K562 (cell line): ENCODE measurements at regions of chr19 and their contacts with region 1.

Region 1: DNA sequence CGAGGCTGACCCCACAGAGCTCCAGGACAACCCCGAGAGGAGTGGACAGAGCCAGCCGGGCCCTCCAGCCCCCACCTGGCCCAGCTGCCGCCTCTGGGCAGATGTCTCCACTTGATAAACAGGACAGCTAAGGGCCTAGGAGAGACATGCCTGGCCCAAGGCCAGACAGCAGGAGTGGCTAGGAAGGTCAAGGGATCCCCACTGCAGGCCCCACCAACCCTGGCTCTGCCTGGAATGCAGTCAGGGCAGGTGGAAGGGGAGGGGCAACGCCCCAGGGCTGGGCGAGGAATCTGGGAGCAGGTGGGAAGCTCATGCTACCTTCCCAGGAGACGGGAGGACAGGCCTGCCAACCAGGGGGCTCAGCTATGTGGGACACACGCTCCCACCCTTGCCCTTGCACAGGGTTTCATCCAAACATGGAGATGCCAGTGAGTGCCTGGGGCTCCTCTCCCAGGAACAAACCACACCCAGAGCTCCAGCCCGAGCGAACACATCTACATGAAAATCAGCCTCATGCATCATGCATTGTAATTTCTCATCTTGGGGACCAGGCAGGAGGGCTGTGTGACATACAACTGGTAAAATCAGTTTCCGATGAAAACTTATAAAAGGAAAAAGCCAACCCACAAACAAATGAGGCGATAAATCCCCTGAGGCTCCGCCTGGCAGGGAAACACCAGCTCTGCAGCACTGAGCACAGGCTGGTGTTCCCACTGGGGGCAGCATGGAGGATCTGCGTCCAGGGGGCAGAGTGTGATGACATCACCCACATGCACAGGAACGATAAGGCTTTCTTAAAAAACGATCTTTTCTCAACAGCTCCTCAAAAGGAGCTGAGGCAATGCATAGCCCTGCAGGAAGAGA is 25.0 kb downstream of the SH3GL1 start:
- DNase-seq: peak; percentile 78 to 95 (median 84)
- ATAC-seq: peak; percentile 75
- H3K4me3 ChIP-seq: peak overlapping the region; percentile 14; the same call in 1 of the 2 replicates
- H3K27ac ChIP-seq: peak overlapping the region; percentile 99
- H3K4me1 ChIP-seq: peaks cover 68 to 88% of the 10 kb centered on the region in 2 experiments
- H3K27me3 ChIP-seq: no peaks in the 10 kb centered on the region
- CTCF ChIP-seq: peak; percentile 87 to 94 (median 93)
- EP300 ChIP-seq: peak; percentile 94
- POLR2A ChIP-seq: no peak
- RAD21 ChIP-seq: peak; percentile 21 to 53

Region 2: DNA sequence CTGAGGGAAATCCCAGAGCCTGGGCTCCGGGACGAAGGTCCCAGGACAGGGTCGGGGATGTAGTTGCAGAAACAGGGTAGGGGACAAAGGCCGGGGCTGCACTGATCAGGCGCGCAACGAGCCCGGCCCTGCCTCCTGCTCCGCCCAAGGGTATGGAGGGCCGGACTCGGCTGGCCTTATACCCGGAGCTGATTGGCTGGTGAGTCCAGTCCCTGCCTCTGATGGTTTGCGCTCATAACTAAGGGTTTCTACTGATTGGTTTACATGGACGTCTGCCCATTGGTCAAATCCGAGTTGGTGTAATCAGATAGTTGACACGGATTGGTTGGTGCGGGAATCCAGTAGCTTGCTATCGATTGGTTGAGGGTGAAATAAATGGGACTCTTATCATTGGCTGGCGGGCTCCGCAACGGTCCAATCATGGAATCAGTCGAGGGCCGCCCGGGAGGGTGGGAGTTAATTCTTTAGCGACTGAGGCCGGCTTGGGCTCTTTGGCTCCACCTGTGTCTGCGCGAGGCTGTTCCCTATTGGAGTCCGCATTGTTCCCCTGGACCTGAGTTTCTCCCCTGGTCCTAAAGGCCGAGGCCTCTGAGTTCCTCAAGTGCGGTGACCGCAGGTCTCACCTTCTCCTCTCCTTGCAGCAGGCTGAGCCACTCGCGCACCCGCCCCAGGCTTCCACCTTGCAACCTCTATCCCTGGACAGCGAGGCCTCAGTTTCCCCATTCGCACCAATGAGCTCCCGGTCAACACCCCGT is 32.6 kb before region 1 on chr19:
- CTCF ChIA-PET with region 1: no interaction called
- POLR2A ChIA-PET with region 1: interaction called, 24 read pairs
- in situ Hi-C with region 1: no loop called
- intact Hi-C with region 1: no loop called
- DNase-seq: peak; percentile 94 to 99 (median 96)
- ATAC-seq: peak; percentile 96
- H3K4me3 ChIP-seq: peak overlapping the region; percentile 77
- H3K27ac ChIP-seq: peak overlapping the region; percentile 89
- H3K4me1 ChIP-seq: peaks cover 13 to 41% of the 10 kb centered on the region in 2 experiments; a peak in 4 of 5 replicates
- H3K27me3 ChIP-seq: no peaks in the 10 kb centered on the region
- CTCF ChIP-seq: peak; percentile 42 to 53 (median 51); a peak in 5 of 6 replicates
- EP300 ChIP-seq: 0 out of 2 replicates have a peak, but pooled peaks have one; percentile 4
- POLR2A ChIP-seq: peak; percentile 87
- RAD21 ChIP-seq: no peak

Region 3: GRCh38 chr19:4362861-4363510 is 12.4 kb before region 1 on chr19:
- CTCF ChIA-PET with region 1: interaction called, 3 read pairs
- POLR2A ChIA-PET with region 1: interaction called, 29 read pairs
- in situ Hi-C with region 1: no loop called
- intact Hi-C with region 1: no loop called
- DNase-seq: no peak
- ATAC-seq: no peak
- H3K4me3 ChIP-seq: no peak overlapping the region
- H3K27ac ChIP-seq: no peak overlapping the region
- H3K4me1 ChIP-seq: peaks cover 0 to 80% of the 10 kb centered on the region in 2 experiments; a peak in 2 of 5 replicates
- H3K27me3 ChIP-seq: no peaks in the 10 kb centered on the region
- CTCF ChIP-seq: peak in 1 of 3 experiments; percentile 23; a peak in 1 of 6 replicates
- EP300 ChIP-seq: no peak
- POLR2A ChIP-seq: 0 out of 2 replicates have a peak, but pooled peaks have one; percentile 16
- RAD21 ChIP-seq: no peak

Region 4: DNA sequence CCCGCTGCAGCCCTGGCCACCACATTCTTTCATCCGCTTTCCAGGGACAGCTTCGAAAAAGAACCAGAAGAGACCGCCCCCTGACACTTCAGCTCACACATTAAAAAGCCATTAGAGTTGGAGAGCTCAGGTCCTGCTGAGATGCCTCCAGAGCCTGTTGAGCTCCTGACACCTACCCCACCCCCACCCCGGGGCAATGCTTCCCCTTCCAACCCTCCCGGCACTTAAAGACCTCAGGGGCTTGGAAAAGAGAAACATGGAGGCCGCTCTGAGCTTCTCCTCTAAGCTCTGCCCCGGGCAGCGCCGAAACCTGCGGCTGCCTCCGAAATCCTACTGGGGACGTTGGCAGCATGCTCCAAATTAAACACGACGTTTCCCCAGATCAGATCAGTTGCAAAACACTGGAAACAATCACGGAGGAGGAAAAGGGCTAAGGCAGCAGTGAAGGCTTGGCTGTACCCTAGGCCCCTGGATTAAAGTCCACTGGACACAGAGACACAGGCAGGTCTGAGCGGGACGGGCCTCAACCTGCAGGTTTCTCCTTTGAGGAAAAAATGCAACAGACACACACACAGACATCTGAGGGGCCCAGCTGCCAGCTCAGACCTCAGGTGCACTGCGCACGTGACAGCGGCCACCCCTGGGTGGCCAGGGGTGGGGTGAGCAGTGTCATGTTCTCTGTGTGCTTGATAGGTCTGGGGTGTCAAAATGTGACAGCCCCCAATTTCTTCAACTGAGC is 15.3 kb after region 1 on chr19:
- CTCF ChIA-PET with region 1: no interaction called
- POLR2A ChIA-PET with region 1: interaction called, 46 read pairs
- in situ Hi-C with region 1: no loop called
- intact Hi-C with region 1: no loop called
- DNase-seq: no peak
- ATAC-seq: peak; percentile 27; the same call in 2 of the 3 replicates
- H3K4me3 ChIP-seq: no peak overlapping the region
- H3K27ac ChIP-seq: peak overlapping the region; percentile 40; the same call in 2 of the 3 replicates
- H3K4me1 ChIP-seq: peaks cover 33 to 54% of the 10 kb centered on the region in 2 experiments
- H3K27me3 ChIP-seq: no peaks in the 10 kb centered on the region
- CTCF ChIP-seq: no peak
- EP300 ChIP-seq: no peak
- POLR2A ChIP-seq: no peak
- RAD21 ChIP-seq: no peak